ENCODE measurements at regions of chr10 and their contacts with region 1.

Region 1: DNA sequence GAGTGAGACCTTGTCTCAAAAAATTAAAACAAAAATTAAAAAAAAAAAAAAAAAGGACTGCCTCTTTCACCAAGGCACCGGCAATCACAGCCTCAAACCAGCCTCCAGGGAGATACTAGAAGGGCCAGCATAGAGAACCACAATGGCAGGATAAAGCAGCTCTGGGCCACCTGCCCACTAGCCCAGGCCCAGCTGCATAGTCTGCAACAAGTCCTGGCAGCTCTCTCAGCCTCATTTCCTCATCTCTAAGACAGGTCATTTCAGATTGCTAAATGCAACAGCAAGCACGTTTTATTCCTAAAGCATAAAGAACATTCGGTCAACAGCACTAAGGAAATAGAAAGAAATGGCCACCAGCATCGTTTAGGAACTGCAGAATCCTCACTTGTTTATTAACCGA is 28.8 kb downstream of the XPNPEP1 start:
- DNase-seq: peak; percentile 43 to 94 (median 58)

Region 2: DNA sequence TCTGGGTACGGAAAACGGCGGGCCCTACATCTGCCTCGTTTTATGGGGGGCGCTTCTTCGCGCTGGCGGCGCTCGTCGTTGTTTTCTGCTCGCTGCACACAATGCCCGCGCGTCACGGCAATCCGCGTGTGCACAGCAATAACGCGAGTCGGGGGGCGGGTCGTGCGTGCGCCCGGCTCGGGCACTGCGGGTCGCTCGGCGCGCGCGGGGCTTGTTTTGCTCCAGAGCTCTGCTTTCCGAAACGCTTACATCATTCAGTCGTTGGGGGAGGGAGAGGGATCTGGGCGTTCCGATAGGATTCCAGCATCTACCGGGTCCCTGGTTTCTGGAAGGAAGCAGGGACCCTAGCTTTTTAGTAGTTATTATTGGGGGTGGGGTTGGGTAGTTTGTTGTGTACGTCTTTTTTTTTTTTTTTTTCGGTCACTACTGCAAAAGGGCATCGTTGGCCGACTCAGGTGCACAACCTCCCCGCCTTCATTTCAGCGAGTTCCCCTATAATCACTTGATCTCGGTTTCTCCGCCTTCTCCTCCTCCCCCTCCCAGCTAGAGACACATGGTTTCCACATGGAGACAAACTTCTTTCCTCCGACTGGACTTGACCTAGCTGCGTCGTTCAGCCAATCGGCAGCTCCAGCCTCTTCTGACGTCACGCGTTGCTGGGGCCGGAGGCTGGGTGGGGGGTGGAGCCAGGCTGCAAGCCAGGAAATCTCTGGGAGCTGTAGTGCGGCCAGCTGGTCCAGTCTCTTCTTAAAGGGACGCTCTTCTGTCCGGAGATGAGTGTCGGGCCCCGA is 316.4 kb after region 1 on chr10:
- intact Hi-C with region 1: loop called (anchors 5 kb)
- DNase-seq: peak; percentile 98 to 100 (median 99)